HEK293 (cell line): ENCODE measurements at regions of chr2 and their contacts with region 1.

Region 1: DNA sequence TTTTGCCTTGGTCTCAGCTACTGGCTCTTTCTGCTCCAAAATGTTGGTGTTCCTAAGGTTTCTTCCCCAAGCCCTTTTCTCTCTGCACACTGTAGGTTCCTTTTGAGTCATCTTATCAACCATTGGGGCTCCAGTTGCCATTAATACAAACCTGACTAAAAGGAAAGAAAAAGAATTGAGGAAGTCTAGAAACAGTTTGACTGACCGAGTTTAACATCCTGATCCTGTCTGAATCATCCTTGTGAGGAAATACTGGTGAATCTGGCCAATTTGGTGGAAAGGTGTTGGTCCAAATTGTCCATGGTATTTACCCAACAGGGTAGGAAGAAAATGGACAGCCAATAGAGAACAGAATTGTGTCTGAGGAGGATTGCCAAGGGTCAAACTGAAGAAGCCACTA is 38.3 kb downstream of the CRYGD start:
- H3K4me3 ChIP-seq: no peak overlapping the region
- H3K27ac ChIP-seq: no peak overlapping the region
- H3K4me1 ChIP-seq: no peaks in the 10 kb centered on the region
- CTCF ChIP-seq: no peak

Region 2: GRCh38 chr2:208047840-208048239 is 38.2 kb before region 1 on chr2:
- CTCF ChIA-PET with region 1: no interaction called
- POLR2A ChIA-PET with region 1: no interaction called
- H3K4me3 ChIP-seq: no peak overlapping the region
- H3K27ac ChIP-seq: no peak overlapping the region
- H3K4me1 ChIP-seq: no peaks in the 10 kb centered on the region
- CTCF ChIP-seq: no peak

Region 3: DNA sequence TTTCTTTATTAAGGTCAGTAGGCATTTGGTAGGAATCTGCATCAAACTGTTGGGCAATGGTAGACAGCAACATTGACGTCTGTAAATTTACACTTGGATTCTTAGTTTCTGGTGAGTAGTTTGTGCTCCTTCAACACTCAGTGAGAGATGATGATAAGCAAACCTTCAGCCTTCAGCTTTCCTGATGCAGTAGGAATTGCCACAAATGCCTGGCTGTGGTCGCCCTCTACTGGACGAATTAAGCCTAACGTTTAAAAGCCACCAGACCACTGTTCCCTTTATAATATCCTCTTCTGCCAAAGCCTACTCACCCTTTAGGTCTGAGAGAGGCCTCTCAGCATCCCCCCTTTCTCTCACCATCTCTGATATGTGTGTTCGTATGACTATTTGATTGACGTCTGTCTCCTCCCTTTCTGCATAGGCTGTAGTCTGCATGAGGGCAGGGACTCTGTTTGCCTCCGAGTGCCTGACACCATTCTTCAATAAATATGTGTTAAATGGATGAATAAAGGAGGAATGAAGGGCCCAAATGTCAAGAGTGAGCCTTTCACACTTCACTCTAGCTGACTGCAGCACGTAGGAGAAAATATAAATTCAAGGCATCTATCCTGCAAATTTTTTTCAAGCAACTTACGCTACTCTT is 13.7 kb before region 1 on chr2:
- CTCF ChIA-PET with region 1: interaction called, 10 read pairs
- POLR2A ChIA-PET with region 1: no interaction called
- H3K4me3 ChIP-seq: no peak overlapping the region
- H3K27ac ChIP-seq: no peak overlapping the region
- H3K4me1 ChIP-seq: no peaks in the 10 kb centered on the region
- CTCF ChIP-seq: peak; percentile 76

Region 4: GRCh38 chr2:208999911-209000310 is 913.9 kb after region 1 on chr2:
- CTCF ChIA-PET with region 1: no interaction called
- POLR2A ChIA-PET with region 1: no interaction called
- H3K4me3 ChIP-seq: no peak overlapping the region
- H3K27ac ChIP-seq: no peak overlapping the region
- H3K4me1 ChIP-seq: no peaks in the 10 kb centered on the region
- CTCF ChIP-seq: no peak